Astrocyte of the spinal cord (primary cell): ENCODE measurements at regions of chr3 and their contacts with region 1.

Region 1: GRCh38 chr3:187745201-187746058 is at the start of gene BCL6:
- DNase-seq: peak; percentile 99
- H3K4me3 ChIP-seq: peak within 1 kb of the TSS; percentile 99
- CTCF ChIP-seq: no peak

Region 2: DNA sequence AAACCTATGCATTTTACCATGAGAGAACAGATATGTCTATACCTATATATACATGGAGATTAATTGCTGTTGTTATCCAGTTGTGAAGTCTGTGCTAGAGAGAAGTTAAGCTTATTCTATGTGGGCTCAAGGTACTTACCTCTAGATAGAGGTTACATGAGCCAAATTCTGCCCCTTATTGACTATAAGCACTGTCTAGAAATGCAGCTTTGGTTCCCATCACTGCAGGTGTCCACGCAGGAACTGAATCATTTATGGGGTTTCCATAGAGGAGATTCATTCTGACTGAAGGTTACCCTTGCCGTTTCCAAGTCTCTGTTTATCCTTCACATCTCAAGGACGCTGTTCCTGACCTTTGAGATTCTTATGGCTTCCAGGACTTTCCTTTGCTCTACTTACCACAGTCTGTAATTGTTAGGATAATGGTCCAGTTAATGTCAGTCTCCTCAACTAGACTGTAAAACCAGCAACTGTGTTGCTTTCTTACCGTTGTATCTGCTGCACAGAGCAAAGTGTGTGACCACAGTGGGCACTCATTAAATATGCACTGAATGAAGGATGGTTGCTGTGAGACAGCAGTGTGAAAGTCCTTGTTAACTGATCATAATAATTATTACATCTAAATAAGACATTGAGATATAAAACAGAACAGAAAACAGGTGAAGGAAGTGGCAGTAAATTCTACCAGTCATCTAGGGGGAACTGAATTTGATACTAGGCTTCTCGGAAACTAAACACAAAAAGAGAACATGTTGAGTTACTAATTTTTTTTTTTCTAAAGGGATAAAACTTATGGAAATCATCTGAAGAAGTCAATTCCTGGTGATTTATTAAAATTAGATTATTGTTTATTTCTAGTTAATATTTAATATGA is 43.8 kb after region 1 on chr3:
- in situ Hi-C with region 1: no loop called
- DNase-seq: no peak
- H3K4me3 ChIP-seq: no peak overlapping the region
- CTCF ChIP-seq: no peak

Region 3: DNA sequence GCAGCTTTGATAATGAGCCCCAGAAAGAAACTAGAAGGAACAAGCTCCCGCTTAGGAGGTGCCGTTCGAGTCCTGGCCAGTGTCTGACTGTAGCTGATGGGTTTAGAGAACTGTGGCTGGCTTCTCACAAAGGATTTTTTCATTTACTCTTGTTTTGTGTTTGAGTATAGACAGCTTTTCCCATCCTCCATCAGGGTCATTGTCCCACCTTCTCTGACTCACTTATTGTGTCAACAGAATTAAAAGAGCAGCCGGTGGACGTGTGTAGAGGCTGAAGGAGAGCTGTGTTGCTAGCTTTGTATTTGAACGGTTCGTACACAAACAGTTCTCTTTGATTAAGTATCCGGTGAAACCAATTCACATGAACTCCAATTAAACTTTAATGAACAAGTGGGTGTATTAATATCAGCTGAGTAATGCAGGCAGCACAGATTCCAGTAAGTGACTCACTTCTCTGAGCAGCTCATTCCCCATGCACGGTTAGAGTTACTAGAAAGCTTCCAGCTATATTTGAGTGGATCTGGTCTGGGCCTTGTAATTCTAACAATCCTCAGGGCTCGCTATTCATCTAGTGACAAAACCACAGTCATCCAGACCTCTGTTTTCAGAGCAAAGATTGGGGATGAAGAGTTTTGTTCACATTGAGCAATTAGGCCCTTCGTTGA is 549.5 kb after region 1 on chr3:
- in situ Hi-C with region 1: loop called (anchors 25 kb)
- DNase-seq: peak; percentile 96
- H3K4me3 ChIP-seq: no peak overlapping the region
- CTCF ChIP-seq: no peak

Region 4: DNA sequence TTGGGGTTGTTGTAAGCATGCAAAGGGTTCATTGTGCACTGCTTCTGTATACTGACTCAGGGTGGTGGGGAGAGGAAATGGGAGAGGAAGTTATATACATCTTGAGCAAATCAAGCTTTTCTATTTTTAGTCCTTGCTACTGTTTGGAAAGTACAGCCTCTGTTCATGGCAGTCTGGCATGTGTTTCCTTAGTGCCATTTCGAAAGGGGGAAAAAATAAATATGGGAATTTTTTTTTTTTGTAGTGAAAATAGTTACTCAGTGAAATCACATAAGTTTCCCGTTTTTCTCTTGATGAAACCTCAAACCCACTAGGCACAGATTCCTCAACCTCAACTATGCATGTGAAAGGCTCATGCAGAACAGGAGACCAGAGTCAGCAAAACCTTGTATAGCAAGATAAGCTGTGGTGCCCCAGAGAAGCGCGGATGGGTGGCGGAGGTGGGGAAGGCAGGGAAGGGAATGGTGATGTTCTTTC is 761.9 kb after region 1 on chr3:
- in situ Hi-C with region 1: loop called (anchors 25 kb)
- DNase-seq: peak; percentile 96
- H3K4me3 ChIP-seq: no peak overlapping the region
- CTCF ChIP-seq: no peak

Region 5: DNA sequence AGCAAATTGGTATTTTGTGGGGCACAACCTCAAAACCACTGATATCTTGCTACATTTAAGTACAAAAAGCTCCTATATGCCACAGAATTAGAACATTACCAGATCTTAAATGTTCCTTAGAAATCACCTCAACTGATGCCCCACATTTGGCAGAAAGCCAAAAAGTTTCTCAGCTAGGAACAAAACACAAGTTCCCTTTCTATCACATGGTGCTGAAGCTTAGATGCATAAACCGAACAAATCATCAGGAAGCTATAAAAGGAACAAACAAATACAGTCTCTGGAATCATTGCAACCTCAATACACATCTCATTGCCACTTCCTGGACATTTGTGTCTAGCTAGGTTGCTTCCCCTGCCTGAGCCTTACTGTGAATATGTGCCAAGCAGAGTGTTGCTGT is 901.2 kb after region 1 on chr3:
- in situ Hi-C with region 1: loop called (anchors 25 kb)
- DNase-seq: peak; percentile 33
- H3K4me3 ChIP-seq: no peak overlapping the region
- CTCF ChIP-seq: no peak

Region 6: DNA sequence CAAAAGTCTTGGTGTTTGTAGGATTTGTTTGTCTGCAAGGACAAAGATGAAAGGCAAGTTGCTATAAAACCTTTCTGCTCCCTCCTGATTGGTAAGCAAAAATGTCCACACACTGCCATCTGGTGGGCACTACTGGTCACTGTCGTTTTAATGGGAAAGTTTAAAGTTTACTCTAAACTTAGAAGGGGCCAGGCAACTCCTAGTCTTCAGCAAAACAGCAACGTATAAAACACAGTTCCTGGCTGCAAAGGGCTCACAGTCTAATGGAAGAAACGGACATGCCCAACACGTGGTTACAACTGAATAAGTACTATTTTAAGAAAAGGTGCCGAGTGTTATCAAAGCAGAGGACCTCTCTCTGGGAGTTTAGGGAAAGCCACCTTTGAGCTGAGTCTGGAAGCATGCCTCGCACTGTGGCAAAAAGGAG is 1402.7 kb after region 1 on chr3:
- in situ Hi-C with region 1: loop called (anchors 25 kb)
- DNase-seq: peak; percentile 73
- H3K4me3 ChIP-seq: no peak overlapping the region
- CTCF ChIP-seq: peak; percentile 72